ENCODE measurements at regions of chr10 and their contacts with region 1.

Region 1: GRCh38 chr10:11625019-11625735 is 13.7 kb upstream of the USP6NL start:
- DNase-seq: no peak
- H3K4me3 ChIP-seq: no peak overlapping the region
- H3K4me3 Mint-ChIP-seq: no peak overlapping the region
- H3K27ac Mint-ChIP-seq: no peak overlapping the region
- H3K4me1 ChIP-seq: peaks cover 9% of the 10 kb centered on the region
- H3K4me1 Mint-ChIP-seq: peaks cover 14% of the 10 kb centered on the region
- H3K27me3 ChIP-seq: no peaks in the 10 kb centered on the region
- H3K27me3 Mint-ChIP-seq: no peaks in the 10 kb centered on the region
- CTCF ChIP-seq: no peak

Region 2: GRCh38 chr10:11573497-11573896 is 51.7 kb before region 1 on chr10:
- CTCF ChIA-PET with region 1: no interaction called
- POLR2A ChIA-PET with region 1: no interaction called
- intact Hi-C with region 1: no loop called
- DNase-seq: no peak
- H3K4me3 ChIP-seq: no peak overlapping the region
- H3K4me3 Mint-ChIP-seq: no peak overlapping the region
- H3K27ac Mint-ChIP-seq: no peak overlapping the region
- H3K4me1 ChIP-seq: 0 out of 2 replicates have a peak, but pooled peaks cover 4% of the 10 kb centered on the region
- H3K4me1 Mint-ChIP-seq: peaks cover 18% of the 10 kb centered on the region
- H3K27me3 ChIP-seq: no peaks in the 10 kb centered on the region
- H3K27me3 Mint-ChIP-seq: no peaks in the 10 kb centered on the region
- CTCF ChIP-seq: no peak

Region 3: GRCh38 chr10:11639831-11640764 is 14.9 kb after region 1 on chr10:
- CTCF ChIA-PET with region 1: no interaction called
- POLR2A ChIA-PET with region 1: no interaction called
- intact Hi-C with region 1: loop called (anchors 1 kb)
- DNase-seq: peak; percentile 43 to 60
- H3K4me3 ChIP-seq: no peak overlapping the region
- H3K4me3 Mint-ChIP-seq: no peak overlapping the region
- H3K27ac Mint-ChIP-seq: no peak overlapping the region
- H3K4me1 ChIP-seq: peaks cover 8% of the 10 kb centered on the region
- H3K4me1 Mint-ChIP-seq: peaks cover 16% of the 10 kb centered on the region
- H3K27me3 ChIP-seq: no peaks in the 10 kb centered on the region
- H3K27me3 Mint-ChIP-seq: no peaks in the 10 kb centered on the region
- CTCF ChIP-seq: no peak

Region 4: GRCh38 chr10:11678074-11678793 is 53.1 kb after region 1 on chr10:
- CTCF ChIA-PET with region 1: no interaction called
- POLR2A ChIA-PET with region 1: no interaction called
- intact Hi-C with region 1: no loop called
- DNase-seq: no peak
- H3K4me3 ChIP-seq: no peak overlapping the region
- H3K4me3 Mint-ChIP-seq: no peak overlapping the region
- H3K27ac Mint-ChIP-seq: no peak overlapping the region
- H3K4me1 ChIP-seq: peaks cover 3% of the 10 kb centered on the region
- H3K4me1 Mint-ChIP-seq: peaks cover 9% of the 10 kb centered on the region
- H3K27me3 ChIP-seq: no peaks in the 10 kb centered on the region
- H3K27me3 Mint-ChIP-seq: no peaks in the 10 kb centered on the region
- CTCF ChIP-seq: no peak

Region 5: DNA sequence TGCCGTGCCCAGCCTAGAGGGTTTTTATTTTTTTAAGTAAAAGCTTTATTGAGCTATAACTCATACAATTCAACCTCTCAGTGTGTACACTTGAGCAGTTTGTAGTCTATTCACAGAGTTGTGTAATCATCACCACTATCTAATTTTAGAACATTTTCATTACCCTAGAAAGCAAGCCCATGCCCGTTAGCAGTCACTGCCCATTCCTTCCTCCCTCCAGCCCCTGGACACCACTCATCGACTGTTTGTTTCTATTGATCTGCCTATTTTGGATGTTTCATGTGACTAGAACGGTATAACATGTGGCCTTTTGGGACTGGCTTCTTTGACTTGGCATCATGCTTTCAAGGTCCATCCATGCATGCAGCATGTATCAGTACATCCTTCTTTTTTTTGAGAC is 478.6 kb after region 1 on chr10:
- CTCF ChIA-PET with region 1: no interaction called
- POLR2A ChIA-PET with region 1: no interaction called
- intact Hi-C with region 1: no loop called
- DNase-seq: no peak
- H3K4me3 ChIP-seq: no peak overlapping the region
- H3K4me3 Mint-ChIP-seq: no peak overlapping the region
- H3K27ac Mint-ChIP-seq: no peak overlapping the region
- H3K4me1 ChIP-seq: no peaks in the 10 kb centered on the region
- H3K4me1 Mint-ChIP-seq: no peaks in the 10 kb centered on the region
- H3K27me3 ChIP-seq: no peaks in the 10 kb centered on the region
- H3K27me3 Mint-ChIP-seq: no peaks in the 10 kb centered on the region
- CTCF ChIP-seq: no peak